A549 (cell line): ENCODE measurements at regions of chr5 and their contacts with region 1.

Region 1: DNA sequence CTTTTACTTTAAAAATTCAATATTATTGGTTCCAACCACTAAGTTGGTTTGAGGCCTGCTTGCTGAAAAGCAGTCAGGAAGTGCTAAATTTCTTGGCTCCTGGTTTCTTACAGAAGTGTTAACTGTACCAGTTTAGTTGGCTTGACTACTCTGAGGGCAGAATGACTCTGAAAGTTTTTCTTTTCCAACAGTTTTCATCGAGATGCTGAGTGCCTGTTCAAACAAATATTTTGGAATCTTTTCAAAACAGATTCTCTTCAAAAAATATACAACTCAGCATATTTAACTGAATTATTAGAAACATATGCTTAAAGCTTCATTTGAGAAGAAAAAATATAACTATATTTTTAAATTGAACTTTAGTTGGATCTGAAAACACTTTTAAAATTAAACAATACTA is 37.0 kb downstream of the SLC38A9 start:
- DNase-seq: no peak
- ATAC-seq: no peak
- H3K4me3 ChIP-seq: no peak overlapping the region
- H3K27ac ChIP-seq: peak overlapping the region in 1 of 2 experiments; percentile 59; a peak in 2 of 6 replicates
- H3K4me1 ChIP-seq: peaks cover 30% of the 10 kb centered on the region
- CTCF ChIP-seq: no peak
- EP300 ChIP-seq: no peak
- POLR2A ChIP-seq: no peak
- RAD21 ChIP-seq: no peak

Region 2: DNA sequence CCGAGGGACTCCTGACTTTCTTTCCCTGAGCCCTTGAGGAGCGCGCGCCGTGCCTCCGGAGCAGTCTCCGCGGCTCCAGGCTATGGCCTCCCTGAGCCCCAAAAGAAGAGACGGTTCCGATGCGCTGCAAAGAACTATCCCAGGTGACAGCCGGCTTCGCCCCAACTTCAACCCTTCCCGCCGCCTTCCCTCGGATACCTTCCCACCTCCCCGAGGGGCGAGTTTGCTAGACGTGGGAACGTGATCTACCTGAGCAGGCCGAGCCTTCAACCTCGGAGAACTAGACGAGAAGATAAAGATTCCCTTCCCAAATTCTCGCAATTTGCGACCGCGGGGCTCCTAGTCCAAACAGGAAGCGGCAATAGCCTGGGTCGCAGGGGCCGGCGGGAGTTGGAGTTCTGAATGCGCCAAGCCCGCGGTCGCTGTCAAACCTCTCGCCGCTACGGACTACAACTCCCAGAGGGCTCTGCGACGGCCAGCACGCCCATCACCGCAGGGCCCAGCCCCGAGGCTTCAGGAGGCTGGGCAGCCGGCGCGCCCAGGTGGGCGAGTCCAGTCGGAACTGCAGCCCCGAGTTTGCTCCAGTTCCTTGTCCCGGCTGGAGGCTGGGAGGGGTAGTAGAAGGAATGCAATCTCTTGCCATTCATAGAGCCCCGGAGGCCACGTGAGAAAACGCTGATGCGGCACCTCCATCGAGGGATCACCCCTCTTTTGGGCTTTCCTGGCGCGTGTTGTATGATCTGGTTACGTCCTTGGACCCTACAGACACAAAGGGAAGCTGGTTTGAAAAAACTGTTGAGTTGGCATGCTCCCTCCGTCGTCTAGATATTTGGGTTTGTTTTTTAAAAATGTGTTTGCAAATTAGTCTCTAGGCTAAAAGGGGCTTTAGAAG is 37.1 kb after region 1 on chr5 and contains the start of gene SLC38A9:
- CTCF ChIA-PET with region 1: no interaction called
- POLR2A ChIA-PET with region 1: interaction called, 11 read pairs
- DNase-seq: peak; percentile 90 to 93
- ATAC-seq: peak; percentile 100
- H3K4me3 ChIP-seq: peak within 1 kb of the TSS; percentile 76
- H3K27ac ChIP-seq: peak within 1 kb of the TSS; percentile 89 to 90
- H3K4me1 ChIP-seq: peaks cover 15% of the 10 kb centered on the region
- CTCF ChIP-seq: no peak
- EP300 ChIP-seq: no peak
- POLR2A ChIP-seq: peak; percentile 85
- RAD21 ChIP-seq: no peak
- polyA plus RNA-seq, gene SLC38A9: 37.3 and 43.5 TPM in 2 replicates

Region 3: DNA sequence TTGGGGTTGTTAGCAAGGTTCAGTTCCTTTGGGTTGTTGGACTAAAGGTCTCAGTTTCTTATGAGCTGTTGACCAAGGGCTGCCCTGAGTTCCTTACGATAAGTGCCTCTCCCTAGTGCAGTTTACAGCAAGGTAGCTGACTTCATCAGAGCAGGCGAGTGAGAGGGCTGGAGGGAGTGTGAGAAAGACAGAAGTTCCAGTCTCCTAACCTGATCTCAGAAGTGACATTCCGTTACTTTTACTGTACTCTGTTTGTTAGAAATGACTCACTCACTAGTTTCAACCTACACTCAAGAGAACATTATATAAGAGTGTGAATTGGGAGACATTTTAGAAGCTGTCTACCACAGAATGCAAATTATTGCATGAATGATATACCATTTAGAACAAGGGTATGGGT is 154.8 kb after region 1 on chr5:
- CTCF ChIA-PET with region 1: no interaction called
- POLR2A ChIA-PET with region 1: no interaction called
- DNase-seq: no peak
- ATAC-seq: no peak
- H3K4me3 ChIP-seq: no peak overlapping the region
- H3K27ac ChIP-seq: no peak overlapping the region
- H3K4me1 ChIP-seq: no peaks in the 10 kb centered on the region
- CTCF ChIP-seq: no peak
- EP300 ChIP-seq: no peak
- POLR2A ChIP-seq: no peak
- RAD21 ChIP-seq: no peak